ENCODE measurements at regions of chr3 and their contacts with region 1.

Region 1: DNA sequence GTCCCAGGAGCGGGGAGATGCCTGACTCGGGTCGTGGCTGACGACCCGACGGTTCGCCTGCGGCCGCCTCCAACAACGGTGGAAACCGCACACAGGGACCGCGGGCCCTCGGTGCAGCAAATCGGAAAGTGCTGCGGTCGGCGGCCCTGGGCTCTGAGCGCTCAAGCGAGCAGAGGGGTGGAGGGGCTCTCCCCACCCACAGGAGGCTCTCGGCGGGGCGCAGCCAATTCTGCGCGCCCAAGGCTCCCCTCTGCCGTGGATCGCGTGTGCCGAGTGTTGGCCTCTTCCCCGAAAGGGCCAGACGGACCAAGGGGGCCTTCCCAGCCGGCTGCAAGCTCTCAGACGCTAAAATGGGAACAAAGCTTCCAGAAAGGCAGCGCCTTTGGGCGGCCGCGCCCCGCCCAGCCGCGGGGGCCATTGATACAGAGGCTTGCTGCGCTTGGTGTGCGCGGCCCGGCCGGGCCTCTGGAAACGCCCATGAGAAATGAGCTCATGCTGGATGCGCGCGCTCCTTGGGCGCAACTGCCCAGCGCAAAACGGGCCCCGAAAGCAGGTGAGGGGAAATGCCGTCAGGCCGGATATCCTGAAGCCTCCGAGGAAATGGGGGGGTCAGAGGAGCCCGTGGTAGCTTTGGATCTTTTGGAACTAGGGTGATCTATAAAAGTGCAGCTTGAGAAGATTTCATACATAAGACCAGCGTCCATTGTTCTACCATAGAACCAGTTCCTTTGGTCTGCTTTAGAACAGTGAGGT is 1.2 kb upstream of the GSK3B start:
- DNase-seq: peak; percentile 41
- H3K4me3 ChIP-seq: peak overlapping the region; percentile 76
- H3K27me3 ChIP-seq: no peaks in the 10 kb centered on the region
- CTCF ChIP-seq: no peak

Region 2: GRCh38 chr3:120160050-120160449 is 64.6 kb after region 1 on chr3:
- CTCF ChIA-PET with region 1: interaction called, 3 read pairs
- POLR2A ChIA-PET with region 1: interaction called, 25 read pairs
- DNase-seq: peak; percentile 100
- H3K4me3 ChIP-seq: no peak overlapping the region
- H3K27me3 ChIP-seq: no peaks in the 10 kb centered on the region
- CTCF ChIP-seq: no peak

Region 3: DNA sequence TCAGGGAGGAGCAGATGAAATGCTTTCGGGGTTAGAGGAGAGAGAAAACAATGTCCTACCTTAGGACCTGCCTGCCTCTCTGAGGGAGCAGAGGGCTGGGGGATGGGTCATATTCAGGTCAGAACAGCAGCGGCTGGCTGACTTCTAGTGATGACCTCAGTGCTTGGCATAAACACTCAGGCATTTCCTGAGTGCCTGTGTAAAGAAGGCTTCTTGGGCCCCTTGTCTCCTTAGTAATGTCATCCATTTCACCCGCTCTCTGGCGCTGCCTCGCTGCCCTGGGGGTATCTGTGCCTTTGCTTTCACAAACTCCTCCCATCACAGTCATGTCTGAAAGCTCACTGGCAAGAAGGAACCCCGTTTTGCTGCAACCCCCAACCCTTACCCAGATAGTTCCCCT is 81.7 kb after region 1 on chr3:
- CTCF ChIA-PET with region 1: interaction called, 10 read pairs
- POLR2A ChIA-PET with region 1: interaction called, 6 read pairs
- DNase-seq: peak; percentile 66
- H3K4me3 ChIP-seq: no peak overlapping the region
- H3K27me3 ChIP-seq: no peaks in the 10 kb centered on the region
- CTCF ChIP-seq: peak; percentile 33; the same call in 1 of the 2 replicates

Region 4: GRCh38 chr3:120214161-120214560 is 118.8 kb after region 1 on chr3:
- CTCF ChIA-PET with region 1: no interaction called
- POLR2A ChIA-PET with region 1: no interaction called
- DNase-seq: no peak
- H3K4me3 ChIP-seq: no peak overlapping the region
- H3K27me3 ChIP-seq: no peaks in the 10 kb centered on the region
- CTCF ChIP-seq: no peak